Left colon (tissue), 2 donors: ENCODE measurements at regions of chr16 and their contacts with region 1.

Region 1: DNA sequence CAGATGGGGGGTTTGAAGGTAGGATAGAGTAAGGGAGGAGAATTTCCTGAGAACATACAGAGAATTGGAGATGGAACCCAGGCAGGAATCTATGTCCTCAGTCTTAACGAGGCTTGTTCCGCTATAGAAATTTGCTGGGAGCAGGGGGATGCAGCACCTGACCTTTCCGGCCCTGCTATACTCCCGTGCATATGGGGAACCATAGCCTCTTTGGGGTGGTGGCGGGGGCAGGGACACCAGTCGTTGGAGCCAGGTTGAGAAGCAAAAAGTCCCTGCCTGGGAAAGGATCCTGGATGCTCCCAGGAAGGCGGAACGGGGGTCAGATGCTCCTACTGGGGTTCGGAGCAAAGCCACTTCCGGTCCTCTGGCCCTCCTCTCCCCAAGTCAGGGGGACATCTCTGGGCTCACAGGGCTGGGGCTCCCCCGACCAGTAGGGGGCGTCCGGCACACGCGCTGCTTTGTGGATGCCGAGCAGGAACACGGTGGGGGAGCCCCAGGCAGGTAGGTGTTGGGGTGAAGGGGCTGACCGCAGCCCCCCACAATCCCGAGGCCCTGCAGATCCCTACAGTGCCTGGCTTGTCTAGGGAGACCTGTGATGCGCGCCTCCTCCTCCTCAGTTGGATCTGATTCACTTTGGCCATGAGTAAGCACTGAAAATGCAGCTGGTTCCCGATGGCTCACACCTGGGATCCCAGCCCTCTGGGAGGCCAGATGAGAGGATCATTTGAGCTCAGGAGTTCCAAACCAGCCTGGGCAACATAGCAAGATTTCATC is 15.5 kb upstream of the TFAP4 start:
- DNase-seq: peak; percentile 65 to 87
- ATAC-seq: peak; percentile 93

Region 2: GRCh38 chr16:3954413-3954921 is 333.9 kb before region 1 on chr16:
- intact Hi-C with region 1: no loop called
- DNase-seq: no peak
- ATAC-seq: no peak

Region 3: GRCh38 chr16:4330277-4330874 is 42.0 kb after region 1 on chr16:
- intact Hi-C with region 1: loop called in 1 of 2 experiments (anchors 2 kb)
- DNase-seq: peak; percentile 63 to 87
- ATAC-seq: peak; percentile 83